ENCODE measurements at regions of chr21 and their contacts with region 1.

Region 1: GRCh38 chr21:14533504-14534428 is 12.3 kb downstream of the SAMSN1 start:
- DNase-seq: no peak
- H3K4me3 Mint-ChIP-seq: peak overlapping the region; percentile 74
- H3K27ac Mint-ChIP-seq: peak overlapping the region; percentile 96
- H3K4me1 Mint-ChIP-seq: peaks cover 77% of the 10 kb centered on the region
- H3K27me3 Mint-ChIP-seq: no peaks in the 10 kb centered on the region

Region 2: GRCh38 chr21:14454016-14455009 is 79.5 kb before region 1 on chr21:
- CTCF ChIA-PET with region 1: interaction called, 7 read pairs
- intact Hi-C with region 1: loop called (anchors 1 kb)
- DNase-seq: no peak
- H3K4me3 Mint-ChIP-seq: no peak overlapping the region
- H3K27ac Mint-ChIP-seq: peak overlapping the region; percentile 88
- H3K4me1 Mint-ChIP-seq: peaks cover 48% of the 10 kb centered on the region
- H3K27me3 Mint-ChIP-seq: peaks cover 2% of the 10 kb centered on the region

Region 3: GRCh38 chr21:14469641-14470040 is 64.1 kb before region 1 on chr21:
- CTCF ChIA-PET with region 1: no interaction called
- intact Hi-C with region 1: no loop called
- DNase-seq: no peak
- H3K4me3 Mint-ChIP-seq: no peak overlapping the region
- H3K27ac Mint-ChIP-seq: no peak overlapping the region
- H3K4me1 Mint-ChIP-seq: no peaks in the 10 kb centered on the region
- H3K27me3 Mint-ChIP-seq: no peaks in the 10 kb centered on the region

Region 4: GRCh38 chr21:14523234-14523633 is 10.5 kb before region 1 on chr21:
- CTCF ChIA-PET with region 1: interaction called, 7 read pairs
- intact Hi-C with region 1: loop called (anchors 1 kb)
- DNase-seq: peak; percentile 51
- H3K4me3 Mint-ChIP-seq: peak overlapping the region; percentile 55
- H3K27ac Mint-ChIP-seq: peak overlapping the region; percentile 68
- H3K4me1 Mint-ChIP-seq: peaks cover 53% of the 10 kb centered on the region
- H3K27me3 Mint-ChIP-seq: no peaks in the 10 kb centered on the region

Region 5: GRCh38 chr21:14559102-14559501 is 25.3 kb after region 1 on chr21:
- CTCF ChIA-PET with region 1: no interaction called
- intact Hi-C with region 1: no loop called
- DNase-seq: no peak
- H3K4me3 Mint-ChIP-seq: no peak overlapping the region
- H3K27ac Mint-ChIP-seq: no peak overlapping the region
- H3K4me1 Mint-ChIP-seq: peaks cover 22% of the 10 kb centered on the region
- H3K27me3 Mint-ChIP-seq: no peaks in the 10 kb centered on the region

Region 6: GRCh38 chr21:14630556-14631069 is 96.8 kb after region 1 on chr21:
- CTCF ChIA-PET with region 1: interaction called, 3 read pairs
- intact Hi-C with region 1: loop called (anchors 1 kb)
- DNase-seq: no peak
- H3K4me3 Mint-ChIP-seq: no peak overlapping the region
- H3K27ac Mint-ChIP-seq: peak overlapping the region; percentile 65
- H3K4me1 Mint-ChIP-seq: peaks cover 19% of the 10 kb centered on the region
- H3K27me3 Mint-ChIP-seq: no peaks in the 10 kb centered on the region

Region 7: GRCh38 chr21:15051644-15052458 is 518.1 kb after region 1 on chr21:
- CTCF ChIA-PET with region 1: no interaction called
- intact Hi-C with region 1: loop called (anchors 5 kb)
- DNase-seq: no peak
- H3K4me3 Mint-ChIP-seq: peak overlapping the region; percentile 69
- H3K27ac Mint-ChIP-seq: peak overlapping the region; percentile 63
- H3K4me1 Mint-ChIP-seq: peaks cover 77% of the 10 kb centered on the region
- H3K27me3 Mint-ChIP-seq: no peaks in the 10 kb centered on the region

Region 8: GRCh38 chr21:15080508-15080907 is 546.7 kb after region 1 on chr21:
- CTCF ChIA-PET with region 1: no interaction called
- intact Hi-C with region 1: no loop called
- DNase-seq: no peak
- H3K4me3 Mint-ChIP-seq: no peak overlapping the region
- H3K27ac Mint-ChIP-seq: no peak overlapping the region
- H3K4me1 Mint-ChIP-seq: no peaks in the 10 kb centered on the region
- H3K27me3 Mint-ChIP-seq: peaks cover 2% of the 10 kb centered on the region